ENCODE measurements at regions of chr14 and their contacts with region 1.

Region 1: GRCh38 chr14:68824517-68825347 is 31.9 kb upstream of the ZFP36L1 start:
- DNase-seq: peak; percentile 72
- CTCF ChIP-seq: peak; percentile 84

Region 2: DNA sequence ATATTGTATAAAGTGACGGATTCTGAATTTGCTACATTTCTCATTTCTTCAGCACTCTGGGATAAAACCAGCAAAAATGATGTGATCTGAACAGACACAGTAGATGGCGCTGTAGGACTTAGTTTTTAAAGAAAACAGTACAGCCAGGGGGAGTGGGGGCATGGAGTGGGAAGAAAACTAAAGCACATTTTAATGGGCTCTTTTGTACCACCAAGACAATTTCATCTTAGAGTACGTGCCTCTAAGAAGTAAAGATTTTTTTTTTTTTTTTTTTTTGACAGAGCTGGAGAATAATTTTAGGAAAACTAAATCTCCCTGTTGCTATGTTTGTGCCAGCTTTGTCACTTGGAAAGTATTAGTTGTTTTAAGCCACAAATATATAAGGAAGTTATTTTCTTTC is 880.8 kb before region 1 on chr14:
- in situ Hi-C with region 1: loop called (anchors 10 kb)
- DNase-seq: peak; percentile 48
- CTCF ChIP-seq: peak; percentile 42

Region 3: GRCh38 chr14:68961781-68962584 is 137.3 kb after region 1 on chr14:
- in situ Hi-C with region 1: no loop called
- DNase-seq: no peak
- CTCF ChIP-seq: no peak

Measured in GM13976 (cell line).